Activated B cell treated with CpG ODN at 0.5 μM for 24 hours (primary cell): ENCODE measurements at regions of chr1 and their contacts with region 1.

Region 1: GRCh38 chr1:151510957-151511635 is at the start of gene CGN:
- DNase-seq: peak; percentile 80
- ATAC-seq: peak; percentile 98
- H3K4me3 Mint-ChIP-seq: peak within 1 kb of the TSS; percentile 87
- H3K27ac Mint-ChIP-seq: peak within 1 kb of the TSS; percentile 36
- H3K4me1 Mint-ChIP-seq: peaks cover 19% of the 10 kb centered on the region
- H3K27me3 Mint-ChIP-seq: no peaks in the 10 kb centered on the region
- CTCF ChIP-seq: no peak
- total RNA-seq, gene CGN: 0.22 and 0.37 TPM in 2 replicates

Region 2: GRCh38 chr1:151472856-151473731 is 38.0 kb before region 1 on chr1:
- CTCF ChIA-PET with region 1: no interaction called
- POLR2A ChIA-PET with region 1: no interaction called
- intact Hi-C with region 1: loop called (anchors 1 kb)
- DNase-seq: peak; percentile 54
- ATAC-seq: peak; percentile 65
- H3K4me3 Mint-ChIP-seq: peak overlapping the region; percentile 86
- H3K27ac Mint-ChIP-seq: peak overlapping the region; percentile 72
- H3K4me1 Mint-ChIP-seq: peaks cover 5% of the 10 kb centered on the region
- H3K27me3 Mint-ChIP-seq: peaks cover 3% of the 10 kb centered on the region
- CTCF ChIP-seq: no peak

Region 3: DNA sequence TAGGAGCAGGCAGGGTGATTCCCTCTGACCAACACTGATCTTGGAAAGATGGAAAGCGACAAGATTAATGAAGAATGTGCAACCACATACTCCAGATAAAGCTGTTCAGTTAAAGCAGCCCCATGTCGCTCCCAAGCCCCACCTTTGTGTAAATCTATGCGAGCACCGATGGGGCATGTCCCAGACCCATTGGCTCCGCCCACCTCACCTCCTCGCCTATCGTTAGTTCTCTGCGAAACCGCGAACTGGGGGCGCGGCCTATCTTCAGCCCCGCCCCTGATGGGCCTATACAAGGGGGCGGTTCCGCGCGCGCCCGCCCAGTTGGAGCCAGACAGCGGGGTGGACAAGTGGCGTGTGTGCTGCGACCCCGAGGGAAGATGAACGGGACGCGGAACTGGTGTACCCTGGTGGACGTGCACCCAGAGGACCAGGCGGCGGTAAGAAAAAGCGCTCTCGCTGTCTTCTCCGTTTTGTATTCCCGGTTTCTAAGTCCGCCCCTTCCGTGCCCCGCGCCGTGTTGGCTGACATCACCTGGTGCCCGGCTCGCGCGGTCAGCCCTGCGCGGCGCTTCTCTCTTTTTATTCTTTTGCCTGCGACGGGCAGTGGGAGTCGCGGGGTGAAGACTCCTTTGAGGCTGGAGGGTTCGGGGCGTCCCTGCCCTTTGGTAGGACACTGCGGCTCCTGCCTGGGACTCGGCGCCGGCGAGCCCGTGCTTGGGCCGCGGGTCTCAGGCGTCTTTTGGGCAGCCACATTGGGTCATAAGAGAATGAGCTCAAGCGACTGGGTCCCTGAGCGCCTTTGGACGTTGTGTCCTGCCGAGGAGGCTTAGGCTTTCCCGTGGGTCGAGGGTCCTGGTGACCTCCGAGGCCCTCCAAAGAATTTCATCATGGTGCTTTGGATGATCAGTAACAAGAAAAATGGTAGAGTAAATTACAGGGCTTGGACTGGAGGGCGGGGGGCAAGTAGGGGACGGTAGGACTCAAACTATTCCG is 29.2 kb after region 1 on chr1 and contains the start of gene TUFT1:
- CTCF ChIA-PET with region 1: no interaction called
- POLR2A ChIA-PET with region 1: interaction called, 4 read pairs
- intact Hi-C with region 1: loop called (anchors 1 kb)
- DNase-seq: peak; percentile 94
- ATAC-seq: peak; percentile 99
- H3K4me3 Mint-ChIP-seq: peak within 1 kb of the TSS; percentile 93
- H3K27ac Mint-ChIP-seq: peak within 1 kb of the TSS; percentile 78
- H3K4me1 Mint-ChIP-seq: peaks cover 24% of the 10 kb centered on the region
- H3K27me3 Mint-ChIP-seq: peaks cover 5% of the 10 kb centered on the region
- CTCF ChIP-seq: no peak
- total RNA-seq, gene TUFT1: 2.3 and 2.4 TPM in 2 replicates

Region 4: GRCh38 chr1:152018537-152018936 is 507.4 kb after region 1 on chr1:
- CTCF ChIA-PET with region 1: no interaction called
- POLR2A ChIA-PET with region 1: no interaction called
- intact Hi-C with region 1: no loop called
- DNase-seq: no peak
- ATAC-seq: no peak
- H3K4me3 Mint-ChIP-seq: no peak overlapping the region
- H3K27ac Mint-ChIP-seq: no peak overlapping the region
- H3K4me1 Mint-ChIP-seq: no peaks in the 10 kb centered on the region
- H3K27me3 Mint-ChIP-seq: peaks cover 28% of the 10 kb centered on the region
- CTCF ChIP-seq: no peak

Region 5: DNA sequence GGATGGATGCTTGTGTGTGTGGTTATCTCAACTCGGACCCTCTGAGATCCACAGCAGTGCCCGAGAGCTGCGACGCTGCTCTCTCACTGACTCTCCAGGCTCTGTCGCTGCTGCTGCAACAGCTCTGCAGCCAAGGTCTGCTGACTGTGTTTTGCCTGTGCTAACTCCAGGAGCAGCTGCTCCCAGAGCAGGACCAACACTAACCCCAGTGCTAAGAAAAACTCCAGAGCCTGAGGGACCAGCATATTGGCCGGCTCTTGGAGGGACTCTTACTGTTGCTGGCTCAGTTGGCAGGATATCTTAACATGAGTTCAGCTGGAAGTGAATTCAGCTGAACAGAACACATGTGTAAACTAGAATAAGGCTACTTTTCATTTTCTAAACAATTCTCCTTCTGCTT is 1168.4 kb after region 1 on chr1:
- CTCF ChIA-PET with region 1: no interaction called
- POLR2A ChIA-PET with region 1: no interaction called
- intact Hi-C with region 1: no loop called
- DNase-seq: no peak
- ATAC-seq: no peak
- H3K4me3 Mint-ChIP-seq: no peak overlapping the region
- H3K27ac Mint-ChIP-seq: no peak overlapping the region
- H3K4me1 Mint-ChIP-seq: no peaks in the 10 kb centered on the region
- H3K27me3 Mint-ChIP-seq: peaks cover 15% of the 10 kb centered on the region
- CTCF ChIP-seq: no peak